ENCODE measurements at regions of chr2 and their contacts with region 1.

Region 1: GRCh38 chr2:231452799-231453508 is 11.3 kb downstream of the NCL start:
- DNase-seq: no peak
- ATAC-seq: peak in 1 of 4 experiments; percentile 11
- H3K4me3 ChIP-seq: no peak overlapping the region
- H3K4me3 Mint-ChIP-seq: no peak overlapping the region
- H3K27ac ChIP-seq: no peak overlapping the region
- H3K27ac Mint-ChIP-seq: peak overlapping the region in 1 of 2 donors; percentile 34
- H3K4me1 ChIP-seq: peaks cover 0 to 5% of the 10 kb centered on the region in 2 experiments
- H3K4me1 Mint-ChIP-seq: peaks cover 13 to 19% (median 17%) of the 10 kb centered on the region in 3 donors
- H3K27me3 ChIP-seq: no peaks in the 10 kb centered on the region
- H3K27me3 Mint-ChIP-seq: no peaks in the 10 kb centered on the region

Region 2: GRCh38 chr2:230824406-230824978 is 628.5 kb before region 1 on chr2:
- CTCF ChIA-PET with region 1: interaction called, 3 to 17 read pairs
- POLR2A ChIA-PET with region 1: no interaction called
- DNase-seq: peak in 33 of 35 experiments; percentile 3 to 90 (median 33)
- ATAC-seq: peak; percentile 69 to 84 (median 74)
- H3K4me3 ChIP-seq: peak overlapping the region in 1 of 2 donors; percentile 24
- H3K4me3 Mint-ChIP-seq: peak overlapping the region in 2 of 3 donors; percentile 16 to 25
- H3K27ac ChIP-seq: no peak overlapping the region
- H3K27ac Mint-ChIP-seq: peak overlapping the region in 1 of 2 donors; percentile 39
- H3K4me1 ChIP-seq: peaks cover 0 to 21% of the 10 kb centered on the region in 2 experiments
- H3K4me1 Mint-ChIP-seq: peaks cover 6 to 13% (median 6%) of the 10 kb centered on the region in 3 donors
- H3K27me3 ChIP-seq: peaks cover 0 to 37% of the 10 kb centered on the region in 2 experiments
- H3K27me3 Mint-ChIP-seq: peaks cover 24 to 34% of the 10 kb centered on the region in 2 donors

Region 3: DNA sequence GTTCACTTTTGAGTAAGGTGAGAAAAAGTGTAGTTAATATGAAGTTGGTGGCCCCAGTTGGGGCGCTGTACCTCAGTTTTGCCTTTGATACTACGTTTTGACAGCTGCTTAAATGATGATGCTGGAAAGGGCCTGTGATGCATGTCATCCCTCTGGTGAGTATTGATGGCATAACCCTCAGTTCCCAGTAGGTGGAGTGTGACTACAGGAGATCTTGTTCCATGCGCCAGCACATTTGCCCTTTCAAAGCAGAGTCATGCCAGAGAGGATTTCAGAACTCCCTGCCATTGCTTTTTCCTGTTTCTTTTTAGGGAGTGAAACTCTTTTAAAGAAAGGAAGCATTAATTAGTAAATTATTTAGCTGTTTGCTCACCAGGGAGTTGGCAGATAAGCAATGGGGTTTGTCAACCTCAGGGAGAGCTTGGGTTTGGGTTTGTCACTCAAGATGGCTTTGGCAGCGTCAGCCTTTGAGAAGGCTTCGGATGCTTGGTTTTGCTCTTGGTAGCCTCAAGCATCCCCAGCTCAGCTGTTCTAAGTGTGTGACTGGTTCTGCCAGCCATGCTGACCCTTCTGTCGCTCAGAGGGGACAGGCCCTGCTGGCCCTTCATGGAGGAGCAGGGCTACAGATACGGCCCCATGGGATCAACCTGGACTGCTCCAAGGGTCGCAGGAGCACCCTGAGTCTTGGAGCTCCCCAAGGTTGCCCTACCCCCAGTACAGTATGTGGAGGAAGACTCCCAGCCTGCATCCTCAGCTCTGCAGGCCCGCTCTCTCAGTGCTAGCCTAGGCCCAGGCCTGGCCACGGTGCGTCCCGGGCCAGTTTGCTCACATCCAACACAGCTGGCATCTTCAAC is 225.4 kb before region 1 on chr2:
- CTCF ChIA-PET with region 1: interaction called, 3 to 22 read pairs
- POLR2A ChIA-PET with region 1: interaction called in 1 of 2 experiments, 4 read pairs
- DNase-seq: peak in 30 of 35 experiments; percentile 3 to 70 (median 20)
- ATAC-seq: peak; percentile 78 to 86 (median 85)
- H3K4me3 ChIP-seq: no peak overlapping the region
- H3K4me3 Mint-ChIP-seq: no peak overlapping the region
- H3K27ac ChIP-seq: no peak overlapping the region
- H3K27ac Mint-ChIP-seq: no peak overlapping the region
- H3K4me1 ChIP-seq: no peaks in the 10 kb centered on the region
- H3K4me1 Mint-ChIP-seq: no peaks in the 10 kb centered on the region
- H3K27me3 ChIP-seq: no peaks in the 10 kb centered on the region
- H3K27me3 Mint-ChIP-seq: no peaks in the 10 kb centered on the region

Region 4: GRCh38 chr2:231411831-231412617 is 40.9 kb before region 1 on chr2:
- CTCF ChIA-PET with region 1: interaction called, 4 to 14 read pairs
- POLR2A ChIA-PET with region 1: no interaction called
- DNase-seq: peak in 34 of 35 experiments; percentile 14 to 76 (median 58)
- ATAC-seq: peak; percentile 92 to 98 (median 96)
- H3K4me3 ChIP-seq: peak overlapping the region in 1 of 2 donors; percentile 67
- H3K4me3 Mint-ChIP-seq: peak overlapping the region; percentile 62 to 67 (median 66)
- H3K27ac ChIP-seq: no peak overlapping the region
- H3K27ac Mint-ChIP-seq: no peak overlapping the region
- H3K4me1 ChIP-seq: peaks cover 5 to 11% of the 10 kb centered on the region in 2 experiments
- H3K4me1 Mint-ChIP-seq: peaks cover 0 to 9% (median 9%) of the 10 kb centered on the region in 3 donors
- H3K27me3 ChIP-seq: peaks cover 0 to 56% of the 10 kb centered on the region in 2 experiments
- H3K27me3 Mint-ChIP-seq: peaks cover 38 to 42% of the 10 kb centered on the region in 2 donors

Region 5: GRCh38 chr2:231463698-231464575 is 11.0 kb after region 1 on chr2 and contains the start of gene NCL:
- CTCF ChIA-PET with region 1: interaction called, 3 to 36 read pairs
- POLR2A ChIA-PET with region 1: interaction called, 6 to 24 read pairs
- DNase-seq: peak; percentile 54 to 92 (median 88)
- ATAC-seq: peak; percentile 71 to 91 (median 89)
- H3K4me3 ChIP-seq: peak within 1 kb of the TSS; percentile 89 to 91
- H3K4me3 Mint-ChIP-seq: peak within 1 kb of the TSS; percentile 94 to 97 (median 95)
- H3K27ac ChIP-seq: peak within 1 kb of the TSS; percentile 99
- H3K27ac Mint-ChIP-seq: peak within 1 kb of the TSS; percentile 98 to 99
- H3K4me1 ChIP-seq: peaks cover 20 to 39% of the 10 kb centered on the region in 2 experiments
- H3K4me1 Mint-ChIP-seq: peaks cover 44 to 58% (median 46%) of the 10 kb centered on the region in 3 donors
- H3K27me3 ChIP-seq: no peaks in the 10 kb centered on the region
- H3K27me3 Mint-ChIP-seq: no peaks in the 10 kb centered on the region
- total RNA-seq, gene NCL: 358 to 468 (median 397) TPM